BJ (cell line): ENCODE measurements at regions of chr12 and their contacts with region 1.

Region 1: DNA sequence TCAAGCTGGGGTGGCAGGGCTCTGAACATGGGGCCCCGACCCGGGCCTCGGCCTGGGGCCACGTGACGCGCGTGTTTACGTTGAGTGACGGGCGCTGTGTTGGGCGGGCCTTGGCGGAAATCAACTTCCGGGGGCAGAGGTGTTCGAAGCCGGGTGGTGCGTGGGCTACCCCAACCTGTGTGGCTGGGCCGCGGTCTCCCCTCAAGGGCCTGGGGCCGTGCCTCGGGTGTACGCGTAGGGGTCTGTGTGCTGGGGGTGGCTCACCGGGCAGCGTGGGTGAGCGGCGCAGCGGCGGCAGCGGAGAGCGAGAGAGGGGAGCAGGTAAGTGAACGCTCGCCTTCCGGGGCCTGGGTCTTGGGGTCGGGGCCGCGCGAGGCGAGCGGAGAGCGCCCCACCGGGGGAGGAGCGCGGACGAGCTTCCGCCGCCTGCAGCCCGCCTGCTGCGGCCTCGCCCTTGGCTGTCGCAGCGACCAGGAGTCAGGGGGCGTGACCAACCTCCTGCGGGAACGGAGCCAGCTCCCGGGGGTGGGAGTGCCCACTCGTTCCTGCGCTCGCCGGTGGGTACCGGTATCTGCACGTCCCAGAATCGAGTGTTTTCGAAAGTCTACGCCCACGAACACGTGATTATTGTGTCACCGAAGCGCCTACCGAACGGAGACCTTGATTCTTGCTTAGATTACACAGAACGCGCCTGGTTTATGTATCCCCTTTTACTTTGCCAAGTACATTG is at the start of gene CCDC91:
- DNase-seq: no peak
- H3K4me3 ChIP-seq: peak within 1 kb of the TSS; percentile 84
- H3K27me3 ChIP-seq: no peaks in the 10 kb centered on the region
- CTCF ChIP-seq: no peak
- polyA plus RNA-seq, gene CCDC91: 11.9 and 13.9 TPM in 2 replicates

Region 2: DNA sequence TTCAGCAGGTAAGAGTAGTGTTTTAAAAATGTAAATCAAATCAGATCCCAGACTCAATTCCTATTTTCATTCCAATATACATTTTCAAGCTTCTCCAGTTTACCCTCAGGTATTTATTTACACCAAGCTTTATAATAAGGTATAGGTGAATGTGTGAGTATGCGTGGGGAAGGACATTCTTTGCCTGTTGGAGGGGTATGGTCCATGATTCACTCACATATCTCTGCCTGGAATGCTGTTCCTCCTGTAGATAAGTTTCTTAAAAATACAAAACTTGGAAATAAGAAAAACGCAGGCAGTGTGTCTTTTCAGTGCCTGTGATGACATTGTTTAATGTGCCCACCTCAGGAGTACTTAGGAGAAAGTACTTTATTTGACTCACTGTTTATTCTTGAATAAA is 118.4 kb after region 1 on chr12:
- CTCF ChIA-PET with region 1: no interaction called
- POLR2A ChIA-PET with region 1: interaction called, 13 read pairs
- DNase-seq: no peak
- H3K4me3 ChIP-seq: no peak overlapping the region
- H3K27me3 ChIP-seq: no peaks in the 10 kb centered on the region
- CTCF ChIP-seq: no peak

Region 3: GRCh38 chr12:28543021-28543890 is 352.8 kb after region 1 on chr12:
- CTCF ChIA-PET with region 1: no interaction called
- POLR2A ChIA-PET with region 1: no interaction called
- DNase-seq: no peak
- H3K4me3 ChIP-seq: no peak overlapping the region
- H3K27me3 ChIP-seq: no peaks in the 10 kb centered on the region
- CTCF ChIP-seq: no peak

Region 4: GRCh38 chr12:28824849-28825248 is 634.4 kb after region 1 on chr12:
- CTCF ChIA-PET with region 1: no interaction called
- POLR2A ChIA-PET with region 1: no interaction called
- DNase-seq: no peak
- H3K4me3 ChIP-seq: no peak overlapping the region
- H3K27me3 ChIP-seq: no peaks in the 10 kb centered on the region
- CTCF ChIP-seq: no peak